Posterior vena cava (tissue), 2 donors: ENCODE measurements at regions of chr12 and their contacts with region 1.

Region 1: DNA sequence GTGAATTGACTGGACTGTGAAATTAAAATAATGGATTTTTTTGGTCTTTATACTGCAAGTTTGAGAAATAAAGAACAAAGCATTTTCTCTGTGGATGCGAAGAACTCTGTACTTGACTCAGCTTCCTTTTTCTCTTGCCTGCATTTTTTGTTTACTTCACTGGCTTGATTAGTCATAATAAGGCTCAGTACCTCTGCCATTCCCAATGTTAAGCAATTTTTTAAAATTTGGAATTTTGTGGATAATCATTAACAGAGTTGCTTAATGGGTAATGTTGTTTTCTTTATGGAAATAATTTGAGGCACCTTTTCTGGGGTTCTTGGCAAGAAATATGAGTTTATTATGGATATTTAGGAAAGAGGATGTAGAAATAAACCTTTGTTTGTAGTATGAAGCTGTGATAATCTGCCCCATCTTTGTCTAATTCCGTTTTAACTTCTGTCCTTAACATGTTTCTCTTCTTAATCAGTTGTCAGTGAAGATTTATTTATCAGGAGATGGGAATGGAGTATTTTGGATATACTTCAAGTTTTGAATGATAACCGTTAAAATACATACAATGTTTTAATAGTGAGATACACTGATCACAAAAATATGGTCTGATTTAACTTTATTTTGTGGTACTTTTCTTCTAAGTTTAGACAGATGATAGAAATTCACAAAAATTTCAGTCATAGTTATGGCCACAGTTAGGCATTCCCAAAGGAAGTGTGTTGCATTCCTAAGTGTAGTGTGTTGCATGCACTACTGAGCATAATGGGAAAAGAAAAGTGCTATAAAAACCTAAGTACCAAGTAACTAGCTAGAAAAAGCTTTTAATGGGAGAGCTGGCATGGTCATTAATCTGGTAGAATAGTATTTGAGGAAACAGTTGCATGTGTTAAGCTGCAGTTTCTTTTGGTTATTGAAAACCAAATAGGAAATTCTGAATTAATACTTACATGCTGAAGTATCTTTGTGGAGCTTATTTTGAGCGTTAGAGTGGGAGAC is 27.7 kb downstream of the WNK1 start:
- DNase-seq: no peak

Region 2: GRCh38 chr12:795305-795704 is 15.3 kb after region 1 on chr12:
- intact Hi-C with region 1: no loop called
- DNase-seq: no peak

Region 3: DNA sequence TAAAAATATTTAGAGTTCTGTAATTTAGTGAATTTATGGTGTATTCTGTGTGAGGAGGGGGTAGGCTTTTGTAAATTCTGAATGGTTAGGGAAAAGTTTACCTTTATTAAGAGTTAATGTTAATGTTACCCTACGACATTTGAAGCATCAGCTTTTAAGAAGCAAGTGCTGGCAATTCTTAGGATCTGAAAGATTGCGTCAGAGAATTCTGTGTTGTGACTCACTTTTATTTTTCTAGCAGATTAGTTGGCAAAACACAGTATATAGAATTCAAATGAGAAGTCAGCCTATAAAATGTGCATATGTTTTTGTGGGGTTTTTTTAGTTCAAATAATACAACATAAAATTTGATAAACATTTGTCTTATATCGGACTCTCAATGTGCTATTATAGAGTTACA is 71.9 kb after region 1 on chr12:
- intact Hi-C with region 1: no loop called
- DNase-seq: no peak

Region 4: DNA sequence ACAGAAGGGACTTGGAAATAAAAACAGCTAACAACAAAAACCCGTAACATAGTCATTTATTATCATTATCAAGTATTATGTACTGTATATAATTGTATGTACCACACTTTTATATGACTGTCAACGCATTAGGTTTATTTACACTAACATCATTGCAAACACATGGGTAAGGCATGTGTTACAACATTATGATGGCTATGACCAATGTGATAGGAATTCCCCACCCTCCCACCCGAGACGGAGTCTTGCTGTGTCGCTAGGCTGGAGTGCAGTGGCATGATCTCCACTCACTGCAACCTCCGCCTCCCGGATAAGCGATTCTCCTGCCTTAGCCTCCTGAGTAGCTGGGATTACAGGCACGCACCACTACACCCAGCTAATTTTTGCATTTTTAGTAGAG is 293.6 kb after region 1 on chr12:
- intact Hi-C with region 1: loop called in 1 of 2 experiments (anchors 10 kb)
- DNase-seq: no peak